Activated T-helper 2 cell treated with anti-CD3 and anti-CD28 coated beads, Interferon-gamma antibody, Interleukin-2, Interleukin-4, amounts not matched to agents 10 μg/mL and 5 μg/mL and 100 μg/mL, durations not matched to agents 14 hours and 24 hours and 36 hours (primary cell): ENCODE measurements at regions of chr14 and their contacts with region 1.

Region 1: DNA sequence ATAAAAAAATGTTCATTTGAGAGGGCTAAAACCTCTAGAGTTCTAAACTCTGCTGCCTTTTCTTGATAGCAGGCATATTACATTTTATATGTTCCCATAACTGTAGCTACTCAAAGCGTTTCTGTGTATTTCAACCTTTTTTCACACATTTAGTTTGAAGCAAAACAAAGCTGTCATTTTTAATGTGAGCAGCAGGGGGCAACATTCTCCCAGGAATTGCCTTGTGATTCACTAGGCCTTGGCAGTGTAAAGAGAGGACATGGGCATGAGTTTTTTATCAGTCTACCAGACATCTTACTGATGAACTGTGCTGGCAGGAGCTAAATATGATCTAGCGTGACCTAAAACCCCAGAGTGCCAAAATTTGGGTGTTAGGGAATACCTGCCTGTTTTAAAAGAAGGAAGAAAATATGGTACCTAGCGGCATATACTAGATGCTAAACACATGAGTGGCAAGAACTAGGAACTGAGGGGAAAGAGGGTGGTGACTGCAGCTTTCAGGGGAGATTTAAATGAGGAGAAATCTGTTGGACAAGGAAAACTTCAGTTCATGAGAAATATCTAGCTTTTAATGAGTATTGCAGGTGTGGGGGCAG is 65.3 kb downstream of the IFT43 start:
- DNase-seq: peak; percentile 24
- H3K4me3 Mint-ChIP-seq: no peak overlapping the region
- H3K27ac Mint-ChIP-seq: no peak overlapping the region
- H3K4me1 Mint-ChIP-seq: no peaks in the 10 kb centered on the region
- H3K27me3 Mint-ChIP-seq: no peaks in the 10 kb centered on the region

Region 2: GRCh38 chr14:76098047-76098446 is 47.2 kb after region 1 on chr14:
- intact Hi-C with region 1: loop called (anchors 2 kb)
- DNase-seq: no peak
- H3K4me3 Mint-ChIP-seq: no peak overlapping the region
- H3K27ac Mint-ChIP-seq: no peak overlapping the region
- H3K4me1 Mint-ChIP-seq: no peaks in the 10 kb centered on the region
- H3K27me3 Mint-ChIP-seq: no peaks in the 10 kb centered on the region

Region 3: DNA sequence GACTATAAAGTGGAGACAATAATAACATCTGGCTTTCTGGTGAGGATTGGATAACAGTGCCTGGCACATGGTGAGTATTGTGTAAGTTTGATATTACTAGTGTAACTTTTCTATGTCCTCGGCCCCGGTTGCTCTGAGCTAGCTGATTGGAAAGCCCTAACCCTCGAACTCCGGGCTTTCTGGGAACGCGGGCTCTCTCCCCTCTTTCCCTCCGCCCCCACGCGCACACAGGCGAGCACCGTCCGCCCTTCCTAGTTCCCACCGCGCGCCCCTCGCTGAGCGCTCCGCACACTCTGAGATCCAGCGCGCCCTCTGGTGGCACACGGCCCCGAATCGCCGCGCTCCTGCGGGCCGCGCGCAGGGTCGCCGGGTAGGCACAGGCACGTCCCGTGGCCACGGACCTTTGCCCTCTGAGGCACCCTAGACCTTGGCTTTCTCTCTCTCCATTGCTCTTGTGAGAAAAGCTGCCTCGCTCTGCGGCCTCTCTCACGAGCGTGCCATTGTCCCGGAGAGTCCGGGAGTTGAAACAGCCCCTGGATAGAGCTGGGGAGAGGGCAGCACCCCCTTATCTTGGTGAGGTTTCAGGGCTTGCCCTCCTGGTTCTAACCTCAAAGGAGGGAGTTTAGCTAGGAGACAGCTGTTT is 301.9 kb after region 1 on chr14:
- intact Hi-C with region 1: loop called (anchors 1 kb)
- DNase-seq: peak; percentile 37
- H3K4me3 Mint-ChIP-seq: no peak overlapping the region
- H3K27ac Mint-ChIP-seq: no peak overlapping the region
- H3K4me1 Mint-ChIP-seq: no peaks in the 10 kb centered on the region
- H3K27me3 Mint-ChIP-seq: peaks cover 12% of the 10 kb centered on the region

Region 4: DNA sequence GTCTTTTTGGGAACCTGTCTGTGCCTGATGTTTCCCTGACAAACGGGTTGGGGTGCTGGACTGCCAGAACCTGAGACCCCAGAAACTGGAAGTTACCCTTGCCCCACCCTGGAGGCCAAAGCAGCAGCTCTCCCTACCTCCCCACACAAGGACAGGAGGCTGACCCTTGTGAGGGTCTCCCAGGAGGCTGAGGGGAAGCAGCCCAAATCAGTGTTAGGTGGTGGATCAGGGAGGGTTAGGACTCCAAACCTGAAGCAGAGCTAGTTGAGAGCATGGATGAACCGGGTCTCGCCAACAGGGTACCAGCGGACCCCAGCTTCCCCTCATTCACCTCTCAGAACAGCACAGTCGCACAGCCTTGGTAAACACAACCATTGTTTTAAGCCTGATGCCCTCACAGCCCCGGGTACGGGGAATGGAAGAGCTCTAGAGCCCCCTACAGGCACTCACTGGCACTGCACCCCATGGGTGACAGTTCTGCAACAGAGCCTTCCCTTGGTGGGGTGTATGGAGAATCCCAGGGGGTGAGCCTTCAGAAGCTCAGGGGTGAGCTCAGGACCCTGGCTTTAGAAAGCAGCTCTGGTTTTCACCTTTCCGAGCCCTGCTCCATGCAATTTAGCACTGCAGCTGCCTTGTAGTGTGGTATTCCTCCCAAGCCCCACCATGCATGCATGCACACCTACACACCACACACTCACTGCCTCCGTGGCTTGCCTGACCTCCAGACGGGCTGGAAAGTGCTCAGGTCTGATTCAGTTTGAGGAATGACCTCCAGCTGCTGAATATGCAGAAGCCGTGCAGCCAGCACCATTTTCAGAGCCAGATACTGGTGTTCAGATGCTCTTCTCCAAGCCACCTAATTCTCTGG is 336.3 kb after region 1 on chr14:
- intact Hi-C with region 1: loop called (anchors 2 kb)
- DNase-seq: peak; percentile 55
- H3K4me3 Mint-ChIP-seq: no peak overlapping the region
- H3K27ac Mint-ChIP-seq: no peak overlapping the region
- H3K4me1 Mint-ChIP-seq: peaks cover 4% of the 10 kb centered on the region
- H3K27me3 Mint-ChIP-seq: peaks cover 27% of the 10 kb centered on the region